WTC11 (cell line): ENCODE measurements at regions of chr4 and their contacts with region 1.

Region 1: DNA sequence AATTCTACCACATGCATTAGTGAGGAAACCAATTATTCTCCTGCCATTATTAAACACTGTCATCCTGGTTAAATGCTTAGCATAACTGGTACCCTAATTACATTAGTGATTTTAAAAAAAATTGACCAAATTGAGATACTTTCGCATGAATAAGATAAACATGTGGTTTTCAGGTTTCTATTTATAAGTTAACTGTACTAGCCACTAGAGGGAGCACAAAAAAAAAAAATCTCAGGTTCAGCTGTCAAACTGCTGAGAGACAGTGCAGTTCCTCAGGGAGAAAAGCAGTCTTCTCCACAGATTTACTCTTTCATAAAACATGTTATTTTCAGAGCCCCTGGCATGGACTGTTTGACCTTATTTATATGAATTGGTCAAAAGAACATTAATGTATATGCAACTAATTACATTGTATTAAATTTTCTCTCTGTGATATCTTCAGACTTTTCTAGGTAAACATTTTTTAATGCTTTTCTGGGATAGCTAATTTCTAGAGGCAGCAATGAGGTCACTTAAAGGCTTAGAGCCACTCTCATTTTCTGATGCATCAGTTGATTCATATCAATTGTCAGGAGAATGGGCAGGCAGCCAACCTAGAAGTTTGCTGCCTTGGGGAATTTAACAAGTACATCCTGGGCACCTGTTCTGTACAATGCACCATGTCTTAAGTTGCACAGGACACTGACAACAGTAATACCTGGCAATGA is 167.5 kb downstream of the CDS1 start:
- DNase-seq: no peak
- ATAC-seq: peak; percentile 52; the same call in 1 of the 2 replicates
- H3K4me3 Mint-ChIP-seq: no peak overlapping the region
- H3K27ac Mint-ChIP-seq: no peak overlapping the region
- H3K4me1 Mint-ChIP-seq: no peaks in the 10 kb centered on the region
- H3K27me3 Mint-ChIP-seq: no peaks in the 10 kb centered on the region
- CTCF ChIP-seq: peak; percentile 41

Region 2: DNA sequence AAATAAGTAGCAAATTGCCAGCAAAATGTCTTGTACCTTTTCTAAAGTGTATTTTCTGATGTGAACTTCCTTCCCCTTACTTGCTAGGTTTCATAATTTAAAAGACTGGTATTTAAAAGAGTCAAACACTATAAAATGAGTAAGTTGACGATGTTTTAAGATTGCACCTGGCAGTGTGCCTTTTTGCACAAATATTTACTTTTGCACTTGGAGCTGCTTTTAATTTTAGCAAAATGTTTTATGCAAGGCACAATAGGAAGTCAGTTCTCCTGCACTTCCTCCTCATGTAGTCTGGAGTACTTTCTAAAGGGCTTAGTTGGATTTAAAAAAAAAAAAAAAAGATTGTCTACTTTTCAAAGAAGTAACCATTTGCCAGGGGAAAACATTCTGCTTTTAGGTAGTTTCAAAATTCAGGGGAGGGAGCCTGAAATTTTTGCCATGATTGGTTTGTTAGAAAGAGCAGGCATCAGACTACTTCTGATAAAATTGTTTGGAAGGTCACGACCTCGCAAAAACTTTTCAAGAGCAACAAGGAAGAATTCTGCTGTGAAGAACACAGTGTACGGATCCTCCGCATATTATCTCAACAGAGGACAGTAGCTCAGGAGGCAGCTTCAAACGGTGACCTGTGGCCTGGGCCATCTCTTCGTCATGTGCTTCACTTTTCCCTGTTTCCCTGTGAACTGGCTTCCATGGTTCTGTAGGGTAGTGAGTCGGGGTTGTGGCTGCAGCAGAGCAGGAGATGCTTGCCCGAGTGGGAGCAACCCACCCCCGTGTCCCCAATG is 101.4 kb before region 1 on chr4:
- CTCF ChIA-PET with region 1: no interaction called
- POLR2A ChIA-PET with region 1: no interaction called
- DNase-seq: no peak
- ATAC-seq: no peak
- H3K4me3 Mint-ChIP-seq: no peak overlapping the region
- H3K27ac Mint-ChIP-seq: peak overlapping the region; percentile 23; the same call in 1 of the 2 replicates
- H3K4me1 Mint-ChIP-seq: peaks cover 49% of the 10 kb centered on the region
- H3K27me3 Mint-ChIP-seq: no peaks in the 10 kb centered on the region
- CTCF ChIP-seq: no peak

Region 3: DNA sequence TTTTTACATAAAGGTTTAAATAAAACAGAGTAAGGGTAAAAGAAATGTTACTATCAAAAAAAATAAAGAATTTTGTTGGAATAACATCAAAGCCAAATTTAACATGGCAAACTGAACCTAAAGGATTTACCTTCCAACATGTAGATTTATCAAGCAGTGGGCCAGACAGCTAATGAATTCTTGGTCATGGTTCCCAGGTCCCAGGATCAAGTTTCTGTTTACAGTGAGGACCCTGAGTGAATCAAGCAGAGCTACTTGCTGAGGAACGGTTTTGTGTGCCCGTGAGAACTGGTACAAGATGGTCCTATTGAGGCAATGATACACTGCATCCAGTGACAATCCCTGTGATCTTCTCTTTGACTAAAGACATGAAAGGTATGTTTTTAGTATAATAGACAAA is 10.3 kb before region 1 on chr4:
- CTCF ChIA-PET with region 1: interaction called, 18 read pairs
- POLR2A ChIA-PET with region 1: no interaction called
- DNase-seq: no peak
- ATAC-seq: no peak
- H3K4me3 Mint-ChIP-seq: no peak overlapping the region
- H3K27ac Mint-ChIP-seq: no peak overlapping the region
- H3K4me1 Mint-ChIP-seq: no peaks in the 10 kb centered on the region
- H3K27me3 Mint-ChIP-seq: no peaks in the 10 kb centered on the region
- CTCF ChIP-seq: no peak

Region 4: DNA sequence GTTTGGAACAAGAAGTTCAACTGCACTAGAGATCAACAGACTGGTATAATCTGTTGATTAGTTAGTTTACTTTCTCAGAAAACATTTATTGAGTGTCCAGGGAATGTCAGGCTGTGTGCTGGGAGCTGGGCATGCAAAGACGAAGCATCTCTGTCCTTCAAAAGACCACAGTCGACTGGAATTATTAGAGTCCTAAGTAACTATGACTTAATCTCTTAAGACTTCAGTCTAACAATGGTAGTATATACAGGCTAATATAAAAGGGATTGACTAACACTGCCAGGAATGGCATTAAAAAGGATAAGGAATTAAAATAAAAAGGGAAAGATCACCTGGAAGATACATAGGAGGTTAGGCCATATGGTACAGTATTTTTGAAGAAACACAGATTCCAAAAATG is 87.3 kb after region 1 on chr4:
- CTCF ChIA-PET with region 1: no interaction called
- POLR2A ChIA-PET with region 1: no interaction called
- DNase-seq: no peak
- ATAC-seq: no peak
- H3K4me3 Mint-ChIP-seq: no peak overlapping the region
- H3K27ac Mint-ChIP-seq: no peak overlapping the region
- H3K4me1 Mint-ChIP-seq: no peaks in the 10 kb centered on the region
- H3K27me3 Mint-ChIP-seq: no peaks in the 10 kb centered on the region
- CTCF ChIP-seq: no peak

Region 5: GRCh38 chr4:84966383-84967242 is 216.2 kb after region 1 on chr4 and contains the start of gene WDFY3:
- CTCF ChIA-PET with region 1: interaction called, 26 read pairs
- POLR2A ChIA-PET with region 1: no interaction called
- DNase-seq: peak; percentile 84
- ATAC-seq: peak; percentile 84
- H3K4me3 Mint-ChIP-seq: peak within 1 kb of the TSS; percentile 98
- H3K27ac Mint-ChIP-seq: peak within 1 kb of the TSS; percentile 98
- H3K4me1 Mint-ChIP-seq: peaks cover 38% of the 10 kb centered on the region
- H3K27me3 Mint-ChIP-seq: 0 out of 2 replicates have a peak, but pooled peaks cover 3% of the 10 kb centered on the region
- CTCF ChIP-seq: no peak
- total RNA-seq, gene WDFY3: 62.0 to 77.2 TPM (median 71.4 TPM) in 3 replicates